Activated T-helper 1 cell treated with anti-CD3 and anti-CD28 coated beads, Interleukin-12 subunit alpha, Interleukin-12 subunit beta, Interleukin-2, Interleukin-4 antibody, amounts not matched to agents 30 ng/mL and 10 ng/mL and 1 ng/mL, durations not matched to agents 14 hours and 24 hours and 36 hours (primary cell): ENCODE measurements at regions of chr11 and their contacts with region 1.

Region 1: DNA sequence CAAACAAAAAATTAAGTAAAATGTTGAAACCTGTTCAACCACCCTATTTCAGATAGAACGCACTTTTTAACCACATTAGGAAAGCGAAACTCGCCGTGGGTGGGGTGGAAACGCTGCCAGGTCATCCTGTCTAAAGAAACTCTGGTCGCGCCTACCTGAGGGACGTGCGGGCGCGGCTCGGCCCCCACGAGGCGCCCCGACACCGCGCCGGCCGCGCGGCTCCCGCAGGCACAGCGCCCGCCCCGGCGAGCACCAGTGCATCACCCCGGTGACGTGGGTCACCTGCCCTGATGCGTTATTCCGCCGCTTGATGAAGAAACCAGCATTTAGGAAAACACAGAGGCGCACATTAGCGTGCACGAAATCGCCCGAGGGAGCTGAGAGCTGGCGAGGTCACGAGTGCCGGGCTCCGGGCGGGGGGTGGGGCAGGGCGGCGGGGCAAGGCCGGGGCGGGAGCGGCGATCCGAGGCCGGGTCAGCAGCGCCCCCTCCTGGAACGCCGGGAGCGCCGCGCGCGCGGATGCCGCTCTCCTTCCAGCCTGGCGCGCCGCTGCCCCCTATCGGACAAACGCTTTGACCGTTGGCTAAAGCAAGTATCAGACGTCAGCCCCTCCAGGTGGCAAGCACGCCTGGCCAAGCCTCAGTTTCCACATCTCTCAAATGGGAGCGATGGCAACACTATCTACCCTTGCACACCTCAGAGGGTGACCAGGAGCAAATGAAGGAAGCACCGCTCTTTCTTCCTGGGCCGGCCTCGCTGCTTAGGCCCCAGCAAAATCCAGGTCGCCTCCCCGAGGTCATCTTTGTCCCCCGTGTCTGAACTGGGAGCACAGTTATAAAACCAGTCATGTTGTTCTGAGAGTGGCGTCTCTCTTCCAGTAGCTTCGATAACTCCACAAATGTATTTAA is 15.7 kb upstream of the SNX32 start:
- DNase-seq: peak; percentile 90
- H3K4me3 Mint-ChIP-seq: peak overlapping the region; percentile 82
- H3K27ac Mint-ChIP-seq: peak overlapping the region; percentile 82
- H3K4me1 Mint-ChIP-seq: peaks cover 19% of the 10 kb centered on the region
- H3K27me3 Mint-ChIP-seq: peaks cover 9% of the 10 kb centered on the region

Region 2: DNA sequence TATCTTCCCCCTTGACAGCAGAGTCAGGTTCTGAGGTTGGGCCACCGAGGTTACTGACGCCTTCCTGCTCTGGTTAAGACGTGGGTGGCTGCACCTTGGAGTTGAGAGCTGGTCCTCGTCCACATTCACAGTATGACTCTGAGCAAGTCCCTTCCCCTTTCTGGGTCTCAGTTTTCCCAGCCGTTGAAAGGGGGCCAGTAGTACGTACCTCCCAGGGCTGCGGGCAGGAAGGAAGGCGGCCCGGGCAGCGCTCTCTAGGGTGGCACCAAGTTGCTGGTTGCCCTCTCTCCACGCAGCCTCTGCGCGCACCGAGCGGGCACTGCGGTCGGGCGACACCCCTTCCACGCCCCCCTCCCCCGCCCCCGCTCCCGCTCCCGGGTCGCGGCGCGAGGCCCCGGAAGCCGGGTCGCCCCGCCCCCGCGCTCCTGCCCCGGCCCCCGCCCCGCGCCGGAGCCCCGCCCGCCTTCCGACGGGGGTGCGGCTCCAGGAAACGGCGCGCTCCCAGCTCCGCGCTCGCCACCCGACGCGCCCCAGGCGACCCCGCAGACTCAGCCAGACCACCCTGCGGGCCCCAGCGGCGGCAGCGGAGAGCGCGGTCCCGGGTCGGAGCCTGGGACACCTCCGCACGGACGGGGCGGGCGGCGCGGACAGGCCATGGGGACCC is 242.4 kb before region 1 on chr11 and contains the start of gene EHBP1L1:
- intact Hi-C with region 1: loop called (anchors 5 kb)
- DNase-seq: peak; percentile 76
- H3K4me3 Mint-ChIP-seq: peak within 1 kb of the TSS; percentile 92
- H3K27ac Mint-ChIP-seq: peak within 1 kb of the TSS; percentile 88
- H3K4me1 Mint-ChIP-seq: peaks cover 48% of the 10 kb centered on the region
- H3K27me3 Mint-ChIP-seq: no peaks in the 10 kb centered on the region
- total RNA-seq, gene EHBP1L1: 168 and 178 TPM in 2 replicates

Region 3: DNA sequence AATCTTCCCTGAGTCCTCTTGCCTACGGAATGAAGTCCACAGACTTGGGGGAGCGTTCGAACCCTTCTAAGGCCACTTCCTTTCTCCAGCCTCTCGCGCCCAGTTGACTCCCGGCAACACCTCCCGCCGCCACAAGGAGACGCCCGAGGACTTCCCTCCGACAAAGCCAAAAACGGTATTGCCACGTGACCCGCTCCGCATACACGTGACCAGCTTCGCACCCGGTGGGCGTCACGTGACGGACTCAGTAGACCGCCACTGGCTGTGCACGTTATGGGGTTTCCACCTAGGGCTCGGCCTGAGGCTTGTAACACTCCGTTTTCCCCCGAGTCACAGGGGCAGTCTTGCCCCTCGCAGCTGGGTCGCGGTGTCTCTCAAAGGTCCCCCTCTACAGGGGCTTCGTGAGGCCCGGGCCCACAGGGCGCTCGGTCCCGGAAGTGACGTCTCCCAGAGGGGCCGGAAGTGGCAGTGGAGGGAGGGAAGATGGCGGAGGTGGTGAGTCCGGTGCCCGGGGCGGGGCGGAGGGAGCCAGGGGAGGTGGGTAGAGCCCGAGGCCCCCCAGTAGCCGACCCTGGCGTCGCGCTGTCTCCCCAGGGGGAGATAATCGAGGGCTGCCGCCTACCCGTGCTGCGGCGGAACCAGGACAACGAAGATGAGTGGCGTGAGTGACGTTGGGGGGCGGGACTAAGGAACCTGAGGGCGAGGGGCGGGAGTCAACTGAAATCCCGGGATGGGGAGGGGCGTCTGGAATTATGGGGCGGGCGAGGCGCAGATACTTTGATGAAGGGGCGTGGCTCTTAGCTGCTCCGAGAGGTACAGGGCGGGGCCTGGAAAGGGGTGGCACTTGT is 106.1 kb before region 1 on chr11 and contains the start of gene KAT5:
- intact Hi-C with region 1: loop called (anchors 1 kb)
- DNase-seq: peak; percentile 98
- H3K4me3 Mint-ChIP-seq: peak within 1 kb of the TSS; percentile 96
- H3K27ac Mint-ChIP-seq: peak within 1 kb of the TSS; percentile 98
- H3K4me1 Mint-ChIP-seq: peaks cover 29% of the 10 kb centered on the region
- H3K27me3 Mint-ChIP-seq: no peaks in the 10 kb centered on the region
- total RNA-seq, gene KAT5: 68.1 and 75.0 TPM in 2 replicates

Region 4: DNA sequence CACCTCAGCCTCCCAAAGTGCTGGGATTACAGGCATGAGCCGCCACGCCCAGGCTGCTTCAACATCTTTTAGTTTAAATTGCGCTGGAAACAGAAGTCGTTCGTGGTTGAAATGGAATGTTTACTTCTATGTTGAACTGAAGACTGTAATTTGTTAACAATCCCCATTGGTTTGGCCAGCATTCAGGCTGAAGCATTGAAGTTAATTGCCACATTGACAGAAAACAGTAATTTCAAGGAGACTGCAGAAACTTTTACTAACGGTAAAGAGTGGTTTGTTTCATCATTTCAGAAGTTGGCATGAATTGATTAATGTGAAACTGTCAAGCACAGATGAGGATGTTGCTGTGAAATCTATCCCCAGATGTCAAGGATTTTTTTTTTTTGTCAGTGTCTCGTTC is 51.6 kb before region 1 on chr11:
- intact Hi-C with region 1: loop called (anchors 10 kb)
- DNase-seq: no peak
- H3K4me3 Mint-ChIP-seq: no peak overlapping the region
- H3K27ac Mint-ChIP-seq: no peak overlapping the region
- H3K4me1 Mint-ChIP-seq: peaks cover 5% of the 10 kb centered on the region
- H3K27me3 Mint-ChIP-seq: peaks cover 2% of the 10 kb centered on the region

Region 5: GRCh38 chr11:65779851-65780577 is 38.1 kb before region 1 on chr11:
- intact Hi-C with region 1: loop called (anchors 1 kb)
- DNase-seq: peak; percentile 78
- H3K4me3 Mint-ChIP-seq: peak overlapping the region; percentile 88
- H3K27ac Mint-ChIP-seq: peak overlapping the region; percentile 91
- H3K4me1 Mint-ChIP-seq: peaks cover 27% of the 10 kb centered on the region
- H3K27me3 Mint-ChIP-seq: peaks cover 20% of the 10 kb centered on the region

Region 6: GRCh38 chr11:65791691-65792213 is 26.3 kb before region 1 on chr11:
- intact Hi-C with region 1: loop called (anchors 1 kb)
- DNase-seq: peak; percentile 56
- H3K4me3 Mint-ChIP-seq: no peak overlapping the region
- H3K27ac Mint-ChIP-seq: peak overlapping the region; percentile 29
- H3K4me1 Mint-ChIP-seq: peaks cover 17% of the 10 kb centered on the region
- H3K27me3 Mint-ChIP-seq: peaks cover 24% of the 10 kb centered on the region

Region 7: GRCh38 chr11:65833297-65834030 is 15.4 kb after region 1 on chr11 and contains the start of gene SNX32:
- intact Hi-C with region 1: loop called (anchors 1 kb)
- DNase-seq: peak; percentile 93
- H3K4me3 Mint-ChIP-seq: no peak within 1 kb of the TSS
- H3K27ac Mint-ChIP-seq: no peak within 1 kb of the TSS
- H3K4me1 Mint-ChIP-seq: peaks cover 23% of the 10 kb centered on the region
- H3K27me3 Mint-ChIP-seq: peaks cover 9% of the 10 kb centered on the region
- total RNA-seq, gene SNX32: 1.6 and 1.9 TPM in 2 replicates